Activated CD4-positive, alpha-beta T cell treated with anti-CD3 and anti-CD28 coated beads, Interleukin-2, amount 10 ng/mL, durations not matched to agents 7 days and 5 days (primary cell): ENCODE measurements at regions of chr11 and their contacts with region 1.

Region 1: GRCh38 chr11:111429066-111429506 is 50.0 kb upstream of the POU2AF1 start:
- DNase-seq: peak; percentile 76
- H3K4me3 Mint-ChIP-seq: no peak overlapping the region
- H3K27ac Mint-ChIP-seq: no peak overlapping the region
- H3K4me1 Mint-ChIP-seq: no peaks in the 10 kb centered on the region
- H3K27me3 Mint-ChIP-seq: peaks cover 6% of the 10 kb centered on the region

Region 2: DNA sequence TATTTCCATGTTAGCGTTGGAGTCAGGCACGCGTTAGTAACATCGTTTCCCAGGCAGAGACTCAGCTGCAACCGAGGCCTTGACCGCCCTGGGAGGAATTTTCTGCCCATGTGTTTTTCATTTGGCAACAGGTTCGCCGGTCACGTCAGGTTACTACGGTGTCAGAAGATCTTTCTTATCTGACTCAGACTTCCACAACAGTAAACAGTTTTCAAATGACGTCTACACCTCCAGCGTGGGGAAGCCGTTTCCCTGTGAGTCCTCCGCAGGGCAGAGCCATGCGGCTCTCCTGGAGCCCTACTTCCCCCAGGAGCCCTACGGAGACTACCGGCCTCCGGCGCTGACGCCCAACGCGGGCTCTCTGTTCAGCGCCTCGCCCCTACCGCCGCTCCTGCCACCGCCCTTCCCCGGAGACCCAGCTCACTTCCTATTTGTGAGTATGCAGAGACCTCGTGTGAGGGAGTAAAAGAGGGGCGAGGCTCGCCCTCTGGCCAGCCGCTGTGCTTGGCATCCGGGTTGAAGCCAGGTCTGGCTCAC is 145.1 kb before region 1 on chr11:
- CTCF ChIA-PET with region 1: interaction called, 19 read pairs
- POLR2A ChIA-PET with region 1: interaction called, 3 read pairs
- DNase-seq: no peak
- H3K4me3 Mint-ChIP-seq: no peak overlapping the region
- H3K27ac Mint-ChIP-seq: no peak overlapping the region
- H3K4me1 Mint-ChIP-seq: no peaks in the 10 kb centered on the region
- H3K27me3 Mint-ChIP-seq: peaks cover 3% of the 10 kb centered on the region

Region 3: GRCh38 chr11:111378861-111379601 is 50.1 kb before region 1 on chr11 and contains the start of gene POU2AF1:
- CTCF ChIA-PET with region 1: interaction called, 12 read pairs
- POLR2A ChIA-PET with region 1: interaction called, 3 read pairs
- DNase-seq: peak; percentile 87
- H3K4me3 Mint-ChIP-seq: peak within 1 kb of the TSS; percentile 70
- H3K27ac Mint-ChIP-seq: peak within 1 kb of the TSS; percentile 97
- H3K4me1 Mint-ChIP-seq: peaks cover 43% of the 10 kb centered on the region
- H3K27me3 Mint-ChIP-seq: no peaks in the 10 kb centered on the region
- total RNA-seq, gene POU2AF1: 1.6 to 2.4 TPM

Region 4: GRCh38 chr11:111446404-111447111 is 17.5 kb after region 1 on chr11:
- CTCF ChIA-PET with region 1: interaction called, 16 read pairs
- POLR2A ChIA-PET with region 1: no interaction called
- DNase-seq: peak; percentile 90
- H3K4me3 Mint-ChIP-seq: peak overlapping the region; percentile 10
- H3K27ac Mint-ChIP-seq: peak overlapping the region; percentile 60
- H3K4me1 Mint-ChIP-seq: peaks cover 23% of the 10 kb centered on the region
- H3K27me3 Mint-ChIP-seq: peaks cover 3% of the 10 kb centered on the region